ENCODE measurements at regions of chr9 and their contacts with region 1.

Region 1: DNA sequence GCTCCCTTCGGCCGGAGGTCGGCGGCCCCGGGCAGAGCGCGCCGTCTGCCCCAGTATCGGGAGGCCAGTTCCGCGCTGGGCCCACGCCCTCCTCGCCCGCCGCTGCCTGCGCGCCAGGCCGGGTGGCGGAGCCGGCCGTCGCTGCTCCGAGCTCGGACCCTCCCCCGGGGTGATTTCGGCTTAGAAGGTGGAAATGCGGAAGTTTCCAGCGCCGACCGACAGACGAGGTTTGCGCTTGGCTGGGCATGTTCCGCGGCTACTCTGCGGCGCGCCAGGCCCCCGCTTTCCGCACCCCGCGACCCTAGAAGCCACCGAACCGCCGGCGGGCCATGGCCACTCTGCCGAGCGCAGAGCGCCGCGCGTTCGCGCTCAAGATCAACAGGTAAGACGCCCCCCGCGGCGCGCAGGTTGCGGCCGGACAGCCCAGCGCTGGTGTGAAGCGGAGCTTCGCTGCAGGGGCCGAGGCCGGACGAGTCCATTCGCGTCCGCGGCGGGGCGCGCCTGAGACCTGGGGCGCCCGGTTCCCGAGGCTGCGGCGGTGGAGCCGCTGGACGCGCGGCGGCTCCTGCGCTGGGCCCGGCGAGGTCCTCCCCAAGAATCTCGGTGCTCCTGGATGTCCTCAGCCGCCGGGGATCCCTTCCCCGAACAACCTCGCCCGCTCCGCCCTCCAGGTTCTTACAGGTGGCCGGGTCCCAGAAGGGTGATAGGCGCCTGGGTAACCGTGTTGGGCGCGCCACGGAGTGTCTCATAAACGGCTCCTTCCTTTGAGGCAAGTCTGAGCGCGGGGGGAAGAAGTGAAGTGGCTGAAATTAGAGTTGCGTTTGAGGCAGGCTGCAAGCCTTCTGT is at the start of gene DOCK8:
- DNase-seq: peak; percentile 84 to 87 (median 86)
- H3K4me3 ChIP-seq: peak within 1 kb of the TSS; percentile 83 to 97 (median 86)
- H3K4me3 Mint-ChIP-seq: peak within 1 kb of the TSS; percentile 88 to 93
- H3K27ac ChIP-seq: peak within 1 kb of the TSS; percentile 94 to 95
- H3K27ac Mint-ChIP-seq: peak within 1 kb of the TSS in 6 of 7 donors; percentile 94 to 98 (median 97)
- H3K4me1 ChIP-seq: peaks cover 70 to 90% of the 10 kb centered on the region in 2 donors
- H3K4me1 Mint-ChIP-seq: peaks cover 45% of the 10 kb centered on the region
- H3K27me3 ChIP-seq: no peaks in the 10 kb centered on the region
- H3K27me3 Mint-ChIP-seq: no peaks in the 10 kb centered on the region
- CTCF ChIP-seq: peak; percentile 73
- polyA plus RNA-seq, gene DOCK8: 46.8 to 100 (median 95.4) TPM

Region 2: GRCh38 chr9:227860-228259 is 13.0 kb after region 1 on chr9:
- intact Hi-C with region 1: loop called in 1 of 2 experiments (anchors 2 kb)
- DNase-seq: peak; percentile 51 to 69 (median 65)
- H3K4me3 ChIP-seq: peak overlapping the region in 1 of 3 experiments; percentile 49
- H3K4me3 Mint-ChIP-seq: peak overlapping the region; percentile 60 to 79
- H3K27ac ChIP-seq: peak overlapping the region; percentile 32 to 73
- H3K27ac Mint-ChIP-seq: peak overlapping the region; percentile 73 to 91 (median 80)
- H3K4me1 ChIP-seq: peaks cover 59 to 66% of the 10 kb centered on the region in 2 donors
- H3K4me1 Mint-ChIP-seq: peaks cover 41% of the 10 kb centered on the region
- H3K27me3 ChIP-seq: no peaks in the 10 kb centered on the region
- H3K27me3 Mint-ChIP-seq: no peaks in the 10 kb centered on the region
- CTCF ChIP-seq: no peak

Region 3: GRCh38 chr9:249025-249424 is 34.2 kb after region 1 on chr9:
- intact Hi-C with region 1: loop called in 1 of 2 experiments (anchors 5 kb)
- DNase-seq: peak in 2 of 3 donors; percentile 31 to 45
- H3K4me3 ChIP-seq: no peak overlapping the region
- H3K4me3 Mint-ChIP-seq: peak overlapping the region in 1 of 2 donors; percentile 26
- H3K27ac ChIP-seq: peak overlapping the region in 1 of 2 donors; percentile 72
- H3K27ac Mint-ChIP-seq: peak overlapping the region; percentile 48 to 92 (median 87)
- H3K4me1 ChIP-seq: peaks cover 28% of the 10 kb centered on the region in 2 donors
- H3K4me1 Mint-ChIP-seq: peaks cover 52% of the 10 kb centered on the region
- H3K27me3 ChIP-seq: no peaks in the 10 kb centered on the region
- H3K27me3 Mint-ChIP-seq: peaks cover 0 to 2% (median 0%) of the 10 kb centered on the region in 3 donors
- CTCF ChIP-seq: no peak

Region 4: GRCh38 chr9:272251-273213 is 57.7 kb after region 1 on chr9:
- intact Hi-C with region 1: loop called (anchors 5 kb)
- DNase-seq: peak; percentile 93 to 97 (median 95)
- H3K4me3 ChIP-seq: peak overlapping the region; percentile 36 to 71 (median 58)
- H3K4me3 Mint-ChIP-seq: peak overlapping the region; percentile 61 to 76
- H3K27ac ChIP-seq: peak overlapping the region; percentile 97 to 99
- H3K27ac Mint-ChIP-seq: peak overlapping the region; percentile 98 to 100 (median 99)
- H3K4me1 ChIP-seq: peaks cover 76 to 83% of the 10 kb centered on the region in 2 donors
- H3K4me1 Mint-ChIP-seq: peaks cover 75% of the 10 kb centered on the region
- H3K27me3 ChIP-seq: no peaks in the 10 kb centered on the region
- H3K27me3 Mint-ChIP-seq: peaks cover 0 to 2% (median 0%) of the 10 kb centered on the region in 3 donors
- CTCF ChIP-seq: no peak